CD8-positive, alpha-beta T cell (primary cell): ENCODE measurements at regions of chr1 and their contacts with region 1.

Region 1: GRCh38 chr1:212558693-212559480 is 49.7 kb upstream of the ATF3 start:
- DNase-seq: peak; percentile 83 to 97 (median 92)
- ATAC-seq: peak; percentile 96
- H3K4me3 ChIP-seq: peak overlapping the region; percentile 45 to 82
- H3K4me3 Mint-ChIP-seq: peak overlapping the region; percentile 85
- H3K27ac ChIP-seq: peak overlapping the region; percentile 76 to 95
- H3K27ac Mint-ChIP-seq: peak overlapping the region; percentile 94
- H3K4me1 ChIP-seq: peaks cover 5% of the 10 kb centered on the region
- H3K4me1 Mint-ChIP-seq: peaks cover 10% of the 10 kb centered on the region
- H3K27me3 ChIP-seq: peaks cover 0 to 3% of the 10 kb centered on the region in 2 experiments
- H3K27me3 Mint-ChIP-seq: no peaks in the 10 kb centered on the region
- CTCF ChIP-seq: no peak

Region 2: DNA sequence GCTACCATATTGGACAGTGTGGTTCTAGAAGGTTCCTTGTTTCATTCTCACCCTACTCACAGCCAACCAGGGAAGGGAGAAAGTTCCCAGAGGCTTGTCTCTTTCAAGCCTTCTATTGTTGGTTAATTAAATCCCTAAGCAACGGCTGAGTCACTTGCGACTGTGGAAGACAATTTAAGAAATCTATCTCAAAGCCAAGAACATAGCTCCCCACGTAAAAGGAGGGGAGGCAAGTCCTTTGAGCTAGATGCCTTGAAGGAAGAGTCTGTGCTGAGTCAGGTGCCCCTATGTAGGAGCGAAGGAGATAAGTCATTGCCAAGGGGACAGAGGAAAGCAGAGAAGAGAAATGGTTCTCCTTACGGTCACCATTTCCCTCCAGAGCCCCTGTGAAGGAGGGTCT is 353.0 kb before region 1 on chr1:
- CTCF ChIA-PET with region 1: no interaction called
- POLR2A ChIA-PET with region 1: no interaction called
- intact Hi-C with region 1: no loop called
- DNase-seq: no peak
- ATAC-seq: no peak
- H3K4me3 ChIP-seq: no peak overlapping the region
- H3K4me3 Mint-ChIP-seq: no peak overlapping the region
- H3K27ac ChIP-seq: no peak overlapping the region
- H3K27ac Mint-ChIP-seq: no peak overlapping the region
- H3K4me1 ChIP-seq: peaks cover 7% of the 10 kb centered on the region
- H3K4me1 Mint-ChIP-seq: peaks cover 6% of the 10 kb centered on the region
- H3K27me3 ChIP-seq: no peaks in the 10 kb centered on the region
- H3K27me3 Mint-ChIP-seq: no peaks in the 10 kb centered on the region
- CTCF ChIP-seq: no peak

Region 3: DNA sequence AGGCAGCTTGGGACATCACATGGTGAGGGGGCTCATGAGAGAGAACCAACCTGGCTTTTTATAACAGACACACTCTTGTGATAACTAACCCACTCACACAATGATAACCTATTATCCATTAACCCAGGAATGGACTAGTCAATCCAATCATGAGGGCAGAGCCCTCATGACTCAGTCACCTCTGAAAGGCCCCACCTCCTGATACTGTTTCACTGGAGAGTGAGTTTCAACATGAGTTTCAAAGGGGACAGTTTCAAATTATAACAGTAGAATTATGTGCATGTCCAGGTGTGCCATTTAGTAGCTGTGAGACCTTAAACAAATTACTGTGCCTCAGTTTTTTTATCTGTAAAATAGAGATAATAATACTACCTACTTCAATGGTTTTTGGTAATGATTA is 321.2 kb before region 1 on chr1:
- CTCF ChIA-PET with region 1: no interaction called
- POLR2A ChIA-PET with region 1: no interaction called
- intact Hi-C with region 1: no loop called
- DNase-seq: no peak
- ATAC-seq: no peak
- H3K4me3 ChIP-seq: no peak overlapping the region
- H3K4me3 Mint-ChIP-seq: no peak overlapping the region
- H3K27ac ChIP-seq: no peak overlapping the region
- H3K27ac Mint-ChIP-seq: no peak overlapping the region
- H3K4me1 ChIP-seq: no peaks in the 10 kb centered on the region
- H3K4me1 Mint-ChIP-seq: peaks cover 2% of the 10 kb centered on the region
- H3K27me3 ChIP-seq: no peaks in the 10 kb centered on the region
- H3K27me3 Mint-ChIP-seq: no peaks in the 10 kb centered on the region
- CTCF ChIP-seq: no peak

Region 4: DNA sequence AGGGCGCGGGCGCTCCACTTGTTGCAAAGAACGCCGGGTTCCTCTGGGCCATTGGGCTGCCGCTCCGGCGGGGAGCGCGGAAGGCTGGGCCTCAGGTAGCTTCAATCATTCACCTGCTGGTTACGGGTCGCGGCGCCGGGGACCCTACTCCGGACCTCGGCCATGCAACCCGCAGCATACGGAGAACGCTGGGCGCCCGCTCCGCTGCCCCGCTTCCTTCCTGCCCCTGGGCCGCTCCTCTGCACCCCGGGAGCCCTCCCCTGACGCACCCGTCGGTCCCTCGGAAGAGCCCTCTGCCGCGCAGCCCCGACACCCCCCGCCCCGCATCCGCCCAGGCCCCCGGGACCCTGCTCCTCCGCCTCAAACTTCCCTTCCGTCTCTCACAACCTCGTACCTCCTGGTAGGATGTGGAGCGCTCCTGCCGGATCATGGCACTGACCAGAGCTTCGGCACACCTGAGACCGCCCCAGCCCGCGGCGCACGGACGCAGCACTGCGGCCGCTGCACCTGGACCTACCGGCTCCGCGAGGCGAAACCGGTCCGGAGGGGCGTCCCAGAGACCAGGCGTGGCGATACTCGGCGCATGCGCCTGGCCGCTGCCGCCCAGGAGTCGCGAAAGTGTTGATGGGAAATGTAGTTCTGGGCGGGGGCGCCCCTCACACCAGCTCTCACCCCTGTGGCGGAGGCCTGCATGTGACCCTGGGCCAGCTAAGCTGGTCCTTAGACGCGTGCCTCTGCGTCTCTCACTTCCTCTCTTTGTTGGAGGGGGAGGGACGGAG is 144.4 kb before region 1 on chr1 and contains the start of gene PACC1:
- CTCF ChIA-PET with region 1: no interaction called
- POLR2A ChIA-PET with region 1: no interaction called
- intact Hi-C with region 1: loop called in 1 of 2 experiments (anchors 2 kb)
- DNase-seq: peak; percentile 73 to 95 (median 86)
- ATAC-seq: peak; percentile 91
- H3K4me3 ChIP-seq: peak within 1 kb of the TSS; percentile 80 to 98
- H3K4me3 Mint-ChIP-seq: peak within 1 kb of the TSS; percentile 97
- H3K27ac ChIP-seq: peak within 1 kb of the TSS; percentile 59 to 67
- H3K27ac Mint-ChIP-seq: peak within 1 kb of the TSS; percentile 92
- H3K4me1 ChIP-seq: peaks cover 25% of the 10 kb centered on the region
- H3K4me1 Mint-ChIP-seq: peaks cover 40% of the 10 kb centered on the region
- H3K27me3 ChIP-seq: no peaks in the 10 kb centered on the region
- H3K27me3 Mint-ChIP-seq: no peaks in the 10 kb centered on the region
- CTCF ChIP-seq: no peak
- total RNA-seq, gene PACC1: 2.6 to 2.9 TPM

Region 5: GRCh38 chr1:212595787-212596714 is 37.2 kb after region 1 on chr1:
- CTCF ChIA-PET with region 1: interaction called, 3 read pairs
- POLR2A ChIA-PET with region 1: no interaction called
- intact Hi-C with region 1: loop called in 1 of 2 experiments (anchors 1 kb)
- DNase-seq: peak in 5 of 9 experiments; percentile 11 to 82 (median 47)
- ATAC-seq: peak; percentile 91
- H3K4me3 ChIP-seq: peak overlapping the region; percentile 9 to 15
- H3K4me3 Mint-ChIP-seq: peak overlapping the region; percentile 68
- H3K27ac ChIP-seq: peak overlapping the region; percentile 26 to 51
- H3K27ac Mint-ChIP-seq: peak overlapping the region; percentile 68
- H3K4me1 ChIP-seq: peaks cover 11% of the 10 kb centered on the region
- H3K4me1 Mint-ChIP-seq: peaks cover 14% of the 10 kb centered on the region
- H3K27me3 ChIP-seq: no peaks in the 10 kb centered on the region
- H3K27me3 Mint-ChIP-seq: peaks cover 11% of the 10 kb centered on the region
- CTCF ChIP-seq: peak; percentile 44

Region 6: DNA sequence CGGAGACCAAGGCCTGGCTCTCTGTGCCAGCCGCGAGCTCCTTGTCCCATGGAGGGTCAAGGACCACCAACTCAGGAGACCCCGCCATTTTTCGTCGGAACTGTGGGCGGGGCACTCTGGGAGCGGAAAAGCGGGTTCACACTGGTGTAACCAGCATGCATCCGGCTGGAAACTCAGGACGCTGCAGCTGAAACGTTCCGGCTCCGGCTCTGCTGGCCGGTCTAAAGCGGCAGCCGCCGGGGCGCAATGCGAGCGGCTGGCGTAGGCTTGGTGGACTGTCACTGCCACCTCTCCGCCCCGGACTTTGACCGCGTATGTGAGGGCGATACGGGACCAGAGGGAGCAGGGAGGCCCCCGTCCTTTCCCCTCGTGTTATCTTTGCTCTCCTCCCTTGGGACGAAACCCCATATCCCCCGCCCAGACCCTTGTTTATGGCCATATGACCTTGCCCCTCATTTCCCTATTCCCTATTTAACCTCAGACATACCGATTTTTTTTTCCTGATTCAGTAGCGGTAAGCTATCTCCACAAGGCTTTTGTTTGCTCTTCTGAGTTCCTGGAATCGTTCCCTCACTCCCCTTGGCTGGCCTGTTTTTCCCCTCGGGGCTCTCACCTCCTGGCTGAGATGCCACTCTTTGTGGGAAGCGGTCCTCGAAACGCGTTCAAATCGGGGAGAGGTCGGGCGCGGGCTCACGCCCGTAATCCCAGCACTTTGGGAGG is 232.9 kb after region 1 on chr1 and contains the starts of genes NSL1 and TATDN3:
- CTCF ChIA-PET with region 1: no interaction called
- POLR2A ChIA-PET with region 1: no interaction called
- intact Hi-C with region 1: loop called (anchors 2 kb)
- DNase-seq: peak; percentile 87 to 98 (median 95)
- ATAC-seq: peak; percentile 93
- H3K4me3 ChIP-seq: peak within 1 kb of the TSS; percentile 93 to 96
- H3K4me3 Mint-ChIP-seq: peak within 1 kb of the TSS; percentile 97
- H3K27ac ChIP-seq: peak within 1 kb of the TSS; percentile 79 to 87
- H3K27ac Mint-ChIP-seq: peak within 1 kb of the TSS; percentile 96
- H3K4me1 ChIP-seq: peaks cover 22% of the 10 kb centered on the region
- H3K4me1 Mint-ChIP-seq: peaks cover 37% of the 10 kb centered on the region
- H3K27me3 ChIP-seq: no peaks in the 10 kb centered on the region
- H3K27me3 Mint-ChIP-seq: no peaks in the 10 kb centered on the region
- CTCF ChIP-seq: no peak
- total RNA-seq, gene NSL1: 13.0 to 19.0 TPM
- total RNA-seq, gene TATDN3: 10.7 to 11.6 TPM

Region 7: GRCh38 chr1:213015099-213016050 is 456.5 kb after region 1 on chr1 and contains the start of gene ANGEL2:
- CTCF ChIA-PET with region 1: no interaction called
- POLR2A ChIA-PET with region 1: no interaction called
- intact Hi-C with region 1: loop called (anchors 5 kb)
- DNase-seq: peak; percentile 90 to 99 (median 95)
- ATAC-seq: peak; percentile 97
- H3K4me3 ChIP-seq: peak within 1 kb of the TSS; percentile 90 to 96
- H3K4me3 Mint-ChIP-seq: peak within 1 kb of the TSS; percentile 100
- H3K27ac ChIP-seq: peak within 1 kb of the TSS; percentile 90 to 92
- H3K27ac Mint-ChIP-seq: peak within 1 kb of the TSS; percentile 100
- H3K4me1 ChIP-seq: peaks cover 19% of the 10 kb centered on the region
- H3K4me1 Mint-ChIP-seq: peaks cover 40% of the 10 kb centered on the region
- H3K27me3 ChIP-seq: no peaks in the 10 kb centered on the region
- H3K27me3 Mint-ChIP-seq: no peaks in the 10 kb centered on the region
- CTCF ChIP-seq: no peak
- total RNA-seq, gene ANGEL2: 47.4 to 52.5 TPM